Mammary epithelial cell (primary cell): ENCODE measurements at regions of chr10 and their contacts with region 1.

Region 1: DNA sequence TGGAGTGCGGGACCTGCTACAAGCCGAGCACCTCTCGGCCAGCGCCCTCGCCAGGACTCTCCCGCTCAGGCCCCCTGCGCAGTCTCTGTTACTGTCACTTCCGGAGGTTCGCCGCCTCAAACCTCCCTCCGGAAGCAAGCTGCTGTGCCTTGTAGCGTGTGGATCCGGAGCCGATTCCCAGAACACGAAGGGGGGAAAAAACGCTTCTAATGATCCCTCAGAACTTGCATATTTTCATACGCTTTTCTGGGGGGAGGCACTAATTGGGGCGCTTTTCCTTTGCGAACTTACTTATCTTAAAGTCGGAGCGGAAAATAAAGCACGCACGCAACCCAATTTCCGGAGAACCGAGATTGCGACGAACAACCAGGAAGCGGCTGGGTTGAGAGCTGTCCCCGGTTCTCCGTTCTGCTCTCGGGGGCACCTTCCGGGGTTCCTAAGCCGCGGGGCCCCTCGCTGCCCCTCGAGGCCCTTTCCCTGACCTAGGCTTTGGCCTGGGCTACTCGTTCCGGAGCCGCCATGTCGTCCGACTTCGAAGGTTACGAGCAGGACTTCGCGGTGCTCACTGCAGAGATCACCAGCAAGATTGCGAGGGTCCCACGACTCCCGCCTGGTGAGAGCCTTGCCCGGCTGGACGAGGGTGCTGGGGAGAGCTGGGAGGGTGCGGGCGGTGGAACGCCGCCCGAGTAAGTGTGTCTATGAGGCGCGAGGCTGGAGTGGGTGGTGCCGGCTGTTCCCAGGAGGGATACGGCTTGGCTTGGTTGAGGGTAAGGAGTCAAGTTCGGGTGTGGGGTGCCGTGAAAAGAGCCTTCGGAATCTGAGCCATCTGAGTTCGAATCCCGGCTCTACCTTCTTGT is at the starts of genes VTI1A and ZDHHC6:
- DNase-seq: peak; percentile 79
- H3K4me3 ChIP-seq: peak within 1 kb of the TSS; percentile 83 to 99 (median 99)
- H3K27ac ChIP-seq: peak within 1 kb of the TSS; percentile 92
- H3K4me1 ChIP-seq: peaks cover 15% of the 10 kb centered on the region
- H3K27me3 ChIP-seq: no peaks in the 10 kb centered on the region
- CTCF ChIP-seq: peak in 1 of 2 donors; percentile 40
- total RNA-seq, gene VTI1A: 39.3 to 41.2 TPM
- total RNA-seq, gene ZDHHC6: 18.3 to 37.7 TPM

Region 2: DNA sequence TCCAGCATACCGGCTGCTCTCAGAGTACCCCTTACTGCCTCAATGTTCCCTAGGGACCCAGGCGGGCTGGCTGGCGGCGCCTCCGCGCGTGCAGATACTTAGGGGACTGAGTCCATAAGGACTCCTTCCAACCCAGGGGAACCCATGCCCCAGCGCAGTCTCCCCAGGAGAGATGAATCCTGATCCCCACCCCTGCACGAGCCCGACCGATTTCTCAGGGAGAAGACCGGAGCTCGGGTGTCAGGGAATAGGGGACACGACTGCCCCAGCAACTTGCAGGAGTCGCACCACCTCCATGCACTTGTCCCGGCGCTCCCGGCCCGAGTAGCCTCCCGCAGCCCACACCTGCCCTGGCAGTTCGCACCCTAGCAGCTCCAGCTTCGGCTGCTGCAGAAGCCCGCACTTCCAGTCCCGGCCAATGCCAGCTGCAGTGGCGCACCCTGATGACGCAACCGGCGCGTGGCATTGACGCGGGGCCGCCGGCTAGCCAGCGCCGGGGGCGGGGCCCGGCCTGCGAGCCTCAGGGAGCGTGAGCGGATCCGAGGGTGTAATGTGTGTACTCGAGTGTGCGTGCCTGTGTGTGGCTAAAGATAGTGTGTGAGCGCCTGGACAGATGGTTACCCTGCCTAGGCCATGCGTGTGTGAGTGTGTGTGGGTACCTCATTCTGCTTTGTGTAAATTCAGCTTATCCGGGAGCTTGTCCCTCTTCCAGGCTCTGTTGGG is 263.6 kb before region 1 on chr10 and contains the start of gene GPAM:
- CTCF ChIA-PET with region 1: no interaction called
- dilution Hi-C with region 1: no loop called
- in situ Hi-C with region 1: no loop called
- intact Hi-C with region 1: loop called (anchors 10 kb)
- DNase-seq: peak; percentile 89
- H3K4me3 ChIP-seq: peak within 1 kb of the TSS; percentile 76 to 92 (median 82)
- H3K27ac ChIP-seq: peak within 1 kb of the TSS; percentile 81
- H3K4me1 ChIP-seq: peaks cover 11% of the 10 kb centered on the region
- H3K27me3 ChIP-seq: no peaks in the 10 kb centered on the region
- CTCF ChIP-seq: no peak
- total RNA-seq, gene GPAM: 9.5 to 17.5 TPM

Region 3: GRCh38 chr10:112383325-112383724 is 63.8 kb before region 1 on chr10:
- CTCF ChIA-PET with region 1: no interaction called
- dilution Hi-C with region 1: no loop called
- in situ Hi-C with region 1: no loop called
- intact Hi-C with region 1: no loop called
- DNase-seq: peak; percentile 7
- H3K4me3 ChIP-seq: no peak overlapping the region
- H3K27ac ChIP-seq: no peak overlapping the region
- H3K4me1 ChIP-seq: no peaks in the 10 kb centered on the region
- H3K27me3 ChIP-seq: no peaks in the 10 kb centered on the region
- CTCF ChIP-seq: no peak

Region 4: GRCh38 chr10:112471878-112472487 is 24.9 kb after region 1 on chr10:
- CTCF ChIA-PET with region 1: no interaction called
- dilution Hi-C with region 1: no loop called
- in situ Hi-C with region 1: no loop called
- intact Hi-C with region 1: loop called (anchors 1 kb)
- DNase-seq: peak; percentile 28
- H3K4me3 ChIP-seq: no peak overlapping the region
- H3K27ac ChIP-seq: no peak overlapping the region
- H3K4me1 ChIP-seq: no peaks in the 10 kb centered on the region
- H3K27me3 ChIP-seq: no peaks in the 10 kb centered on the region
- CTCF ChIP-seq: peak; percentile 67 to 68